ENCODE measurements at regions of chr21 and their contacts with region 1.

Region 1: GRCh38 chr21:44792702-44793591 is 8.7 kb downstream of the UBE2G2 start:
- DNase-seq: peak; percentile 36 to 77 (median 48)
- ATAC-seq: peak; percentile 81 to 93 (median 87)
- H3K4me3 ChIP-seq: no peak overlapping the region
- H3K27ac ChIP-seq: no peak overlapping the region
- H3K4me1 ChIP-seq: peaks cover 0 to 19% (median 10%) of the 10 kb centered on the region in 12 donors
- H3K27me3 ChIP-seq: no peaks in the 10 kb centered on the region
- CTCF ChIP-seq: peak; percentile 67 to 88 (median 76)
- POLR2A ChIP-seq: no peak

Region 2: GRCh38 chr21:44347911-44348753 is 444.8 kb before region 1 on chr21:
- intact Hi-C with region 1: loop called in 1 of 10 experiments (anchors 10 kb)
- DNase-seq: peak in 1 of 5 donors; percentile 24
- ATAC-seq: no peak
- H3K4me3 ChIP-seq: no peak overlapping the region
- H3K27ac ChIP-seq: no peak overlapping the region
- H3K4me1 ChIP-seq: peaks cover 0 to 26% (median 0%) of the 10 kb centered on the region in 12 donors
- H3K27me3 ChIP-seq: peaks cover 9 to 40% (median 30%) of the 10 kb centered on the region in 9 donors
- CTCF ChIP-seq: no peak
- POLR2A ChIP-seq: no peak

Region 3: DNA sequence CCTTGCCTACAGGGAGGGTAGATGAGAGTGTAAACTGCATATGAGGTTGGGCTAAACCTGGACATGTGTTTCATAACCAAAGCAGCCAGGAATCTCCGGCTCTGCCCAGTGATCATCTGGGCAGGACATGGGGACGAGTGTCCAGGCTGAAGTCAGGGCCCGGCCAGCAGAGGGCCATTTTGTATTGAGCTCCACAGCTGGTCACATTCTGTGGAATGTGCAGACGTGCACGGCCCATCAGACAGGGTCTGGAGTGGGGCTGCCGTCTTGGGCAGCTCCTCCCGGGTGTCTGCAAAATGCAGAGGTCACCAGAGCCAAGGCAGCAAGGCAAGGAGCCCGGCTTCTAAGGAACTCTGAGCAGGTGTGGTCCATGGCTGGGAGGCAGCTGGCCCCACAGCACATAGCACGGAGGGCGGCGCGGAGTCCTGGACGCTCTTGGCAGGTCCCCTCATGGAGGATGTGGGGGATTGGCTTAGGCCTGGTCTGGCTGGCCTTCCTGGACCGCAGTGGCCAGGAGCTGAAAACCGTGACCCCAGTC is 331.4 kb before region 1 on chr21:
- intact Hi-C with region 1: loop called in 1 of 10 experiments (anchors 5 kb)
- DNase-seq: peak in 2 of 5 donors; percentile 38 to 62
- ATAC-seq: peak; percentile 49 to 86 (median 72)
- H3K4me3 ChIP-seq: no peak overlapping the region
- H3K27ac ChIP-seq: peak overlapping the region in 1 of 12 donors; percentile 34
- H3K4me1 ChIP-seq: peaks cover 0 to 15% (median 7%) of the 10 kb centered on the region in 12 donors
- H3K27me3 ChIP-seq: no peaks in the 10 kb centered on the region
- CTCF ChIP-seq: peak in 11 of 12 donors; percentile 14 to 63 (median 45)
- POLR2A ChIP-seq: no peak

Region 4: DNA sequence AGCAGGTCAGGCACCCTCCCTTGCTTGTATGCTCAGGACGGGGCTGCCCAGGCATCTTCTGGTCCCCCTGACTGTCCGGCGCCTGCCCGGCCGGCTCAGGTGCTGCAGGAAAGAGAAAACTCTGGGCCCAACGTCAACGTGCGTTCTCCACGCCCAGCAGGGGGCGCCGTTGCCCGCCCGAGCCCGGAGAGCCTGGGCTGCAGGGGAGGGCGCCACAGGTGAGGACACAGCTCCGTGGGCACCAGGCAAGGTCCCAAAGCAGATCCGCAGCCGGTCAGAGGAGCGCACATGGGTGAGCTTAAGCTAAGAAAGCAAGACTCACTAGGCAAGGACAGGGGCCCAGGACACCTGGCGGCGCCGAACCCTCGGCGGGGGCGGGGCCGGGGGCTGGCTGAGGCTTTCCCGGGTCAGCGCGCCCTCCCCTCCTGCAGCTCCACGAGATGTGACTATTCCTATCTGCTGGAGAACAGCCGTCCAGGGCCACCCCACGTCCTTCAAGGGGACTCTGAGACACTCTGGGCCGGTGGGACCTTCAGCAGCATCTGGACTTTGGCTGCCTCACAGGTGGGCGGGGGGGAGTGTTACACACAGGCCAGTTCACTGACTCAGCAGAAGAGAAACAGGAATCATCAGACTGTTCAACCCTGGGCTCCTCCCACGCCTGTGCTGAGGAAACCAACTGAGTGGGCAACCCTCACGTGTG is 282.3 kb before region 1 on chr21:
- intact Hi-C with region 1: loop called in 8 of 10 experiments (anchors 1 to 10 kb)
- DNase-seq: peak; percentile 30 to 80 (median 47)
- ATAC-seq: peak in 3 of 4 donors; percentile 37 to 70 (median 62)
- H3K4me3 ChIP-seq: peak overlapping the region in 1 of 12 donors; percentile 25
- H3K27ac ChIP-seq: no peak overlapping the region
- H3K4me1 ChIP-seq: peaks cover 0 to 14% (median 0%) of the 10 kb centered on the region in 12 donors
- H3K27me3 ChIP-seq: peaks cover 0 to 27% (median 0%) of the 10 kb centered on the region in 9 donors
- CTCF ChIP-seq: peak; percentile 59 to 79 (median 71)
- POLR2A ChIP-seq: no peak

Region 5: DNA sequence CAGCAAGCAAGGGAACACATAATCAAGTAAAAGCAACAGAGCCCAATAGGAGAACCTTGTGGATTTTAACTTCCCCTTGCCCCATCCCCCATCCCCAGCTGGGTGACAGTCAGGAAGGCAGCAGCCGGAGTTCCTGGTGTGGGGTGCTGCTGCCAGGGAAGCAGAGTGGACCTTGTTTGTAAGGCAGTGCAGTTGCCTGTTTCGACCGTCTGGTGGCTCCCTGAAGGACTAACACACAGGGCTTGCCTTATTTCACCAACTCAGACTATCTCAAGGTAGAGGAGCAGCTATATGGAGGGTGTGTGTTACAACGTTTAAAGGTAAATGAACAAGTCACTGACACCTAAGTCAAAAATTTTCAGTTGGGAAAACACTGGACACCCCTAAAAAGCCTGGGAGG is 174.4 kb before region 1 on chr21:
- intact Hi-C with region 1: loop called in 2 of 10 experiments (anchors 2 to 5 kb)
- DNase-seq: peak in 4 of 5 donors; percentile 39 to 59 (median 55)
- ATAC-seq: peak in 3 of 4 donors; percentile 67 to 89 (median 69)
- H3K4me3 ChIP-seq: no peak overlapping the region
- H3K27ac ChIP-seq: peak overlapping the region in 1 of 12 donors; percentile 73
- H3K4me1 ChIP-seq: peaks cover 0 to 8% (median 0%) of the 10 kb centered on the region in 12 donors
- H3K27me3 ChIP-seq: peaks cover 0 to 5% (median 0%) of the 10 kb centered on the region in 9 donors
- CTCF ChIP-seq: peak in 9 of 12 donors; percentile 12 to 52 (median 29)
- POLR2A ChIP-seq: no peak